ENCODE measurements at regions of chr4 and their contacts with region 1.

Region 1: GRCh38 chr4:52983563-52984303 is 121.6 kb downstream of the RASL11B start:
- DNase-seq: no peak
- ATAC-seq: peak; percentile 78

Region 2: GRCh38 chr4:52234561-52235440 is 748.9 kb before region 1 on chr4:
- intact Hi-C with region 1: loop called (anchors 10 kb)
- DNase-seq: no peak
- ATAC-seq: peak; percentile 92

Region 3: DNA sequence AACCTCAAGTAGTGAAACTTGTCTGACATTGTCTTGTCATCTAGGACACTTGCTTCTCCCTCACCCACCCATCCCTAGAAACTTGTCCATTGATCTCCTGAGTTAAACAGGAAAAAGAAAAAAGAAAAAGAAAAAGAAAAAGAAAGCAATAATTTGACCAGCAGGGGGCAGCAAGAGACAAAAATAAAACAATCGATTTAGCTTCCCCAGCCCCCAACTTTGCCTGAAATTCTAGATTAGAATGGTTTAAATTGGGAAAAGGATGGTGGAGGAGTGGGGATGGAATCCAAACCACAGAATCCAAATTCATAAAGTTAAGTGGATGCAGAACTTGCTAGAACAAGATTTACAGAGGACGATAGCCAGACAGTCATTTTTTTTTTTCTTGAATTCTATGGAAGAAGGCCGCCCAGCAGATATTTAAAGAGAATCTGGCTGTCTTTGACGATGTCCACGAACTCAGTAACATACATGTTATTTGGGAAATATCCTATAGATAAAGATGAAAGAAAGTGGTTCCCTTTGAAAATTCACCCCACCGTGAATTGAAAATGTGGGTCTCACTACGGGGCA is 607.5 kb before region 1 on chr4:
- intact Hi-C with region 1: loop called (anchors 2 kb)
- DNase-seq: no peak
- ATAC-seq: no peak

Region 4: GRCh38 chr4:52721968-52722815 is 261.5 kb before region 1 on chr4:
- intact Hi-C with region 1: loop called (anchors 5 kb)
- DNase-seq: peak; percentile 95
- ATAC-seq: peak; percentile 99

Region 5: GRCh38 chr4:52932591-52933470 is 50.9 kb before region 1 on chr4:
- intact Hi-C with region 1: no loop called
- DNase-seq: no peak
- ATAC-seq: no peak

Measured in Right ventricle myocardium inferior (tissue), 1 donor.